ENCODE measurements at regions of chr12 and their contacts with region 1.

Region 1: GRCh38 chr12:5083955-5084849 is 40.5 kb downstream of the KCNA5 start:
- DNase-seq: no peak
- H3K4me3 ChIP-seq: no peak overlapping the region
- H3K27ac ChIP-seq: no peak overlapping the region
- H3K27me3 ChIP-seq: peaks cover 3% of the 10 kb centered on the region
- CTCF ChIP-seq: peak; percentile 82

Region 2: GRCh38 chr12:4628406-4628805 is 455.8 kb before region 1 on chr12:
- CTCF ChIA-PET with region 1: no interaction called
- POLR2A ChIA-PET with region 1: no interaction called
- DNase-seq: no peak
- H3K4me3 ChIP-seq: no peak overlapping the region
- H3K27ac ChIP-seq: no peak overlapping the region
- H3K27me3 ChIP-seq: no peaks in the 10 kb centered on the region
- CTCF ChIP-seq: no peak

Region 3: DNA sequence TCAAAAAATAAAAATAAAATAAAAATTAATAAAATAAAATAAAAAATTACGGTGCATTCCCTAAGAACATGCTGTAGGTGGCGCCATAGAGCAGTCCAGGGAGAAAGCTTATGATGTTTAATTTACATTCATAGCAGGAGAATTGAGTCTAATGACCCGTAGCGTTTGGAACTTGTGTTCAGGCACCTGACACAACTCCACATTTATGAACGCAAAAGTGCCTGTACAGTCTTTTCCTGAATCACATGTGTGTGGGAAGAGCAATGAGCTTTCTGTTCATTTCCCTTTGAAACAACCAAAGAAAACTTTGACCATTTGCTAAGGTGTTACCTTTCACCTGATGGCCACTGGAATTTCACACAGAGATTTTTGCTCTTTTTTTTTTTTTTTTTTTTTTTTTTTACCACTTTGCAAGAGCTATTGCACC is 235.1 kb before region 1 on chr12:
- CTCF ChIA-PET with region 1: interaction called, 194 read pairs
- POLR2A ChIA-PET with region 1: no interaction called
- DNase-seq: no peak
- H3K4me3 ChIP-seq: no peak overlapping the region
- H3K27ac ChIP-seq: no peak overlapping the region
- H3K27me3 ChIP-seq: peaks cover 2% of the 10 kb centered on the region
- CTCF ChIP-seq: peak; percentile 84

Region 4: GRCh38 chr12:5022465-5023061 is 61.6 kb before region 1 on chr12:
- CTCF ChIA-PET with region 1: interaction called, 101 read pairs
- POLR2A ChIA-PET with region 1: no interaction called
- DNase-seq: no peak
- H3K4me3 ChIP-seq: no peak overlapping the region
- H3K27ac ChIP-seq: no peak overlapping the region
- H3K27me3 ChIP-seq: peaks cover 20% of the 10 kb centered on the region
- CTCF ChIP-seq: peak; percentile 89

Region 5: GRCh38 chr12:5073853-5074252 is 10.3 kb before region 1 on chr12:
- CTCF ChIA-PET with region 1: interaction called, 17 read pairs
- POLR2A ChIA-PET with region 1: no interaction called
- DNase-seq: no peak
- H3K4me3 ChIP-seq: no peak overlapping the region
- H3K27ac ChIP-seq: no peak overlapping the region
- H3K27me3 ChIP-seq: peaks cover 15% of the 10 kb centered on the region
- CTCF ChIP-seq: peak; percentile 56

Region 6: GRCh38 chr12:5094551-5094950 is 10.3 kb after region 1 on chr12:
- CTCF ChIA-PET with region 1: interaction called, 15 read pairs
- POLR2A ChIA-PET with region 1: no interaction called
- DNase-seq: no peak
- H3K4me3 ChIP-seq: no peak overlapping the region
- H3K27ac ChIP-seq: no peak overlapping the region
- H3K27me3 ChIP-seq: no peaks in the 10 kb centered on the region
- CTCF ChIP-seq: no peak